ENCODE measurements at regions of chr2 and their contacts with region 1.

Region 1: GRCh38 chr2:34549710-34550345 is 950.7 kb upstream of the FAM98A start:
- DNase-seq: no peak
- H3K4me3 ChIP-seq: no peak overlapping the region
- H3K27ac ChIP-seq: no peak overlapping the region
- H3K4me1 ChIP-seq: no peaks in the 10 kb centered on the region
- H3K27me3 ChIP-seq: no peaks in the 10 kb centered on the region
- CTCF ChIP-seq: no peak
- POLR2A ChIP-seq: no peak

Region 2: DNA sequence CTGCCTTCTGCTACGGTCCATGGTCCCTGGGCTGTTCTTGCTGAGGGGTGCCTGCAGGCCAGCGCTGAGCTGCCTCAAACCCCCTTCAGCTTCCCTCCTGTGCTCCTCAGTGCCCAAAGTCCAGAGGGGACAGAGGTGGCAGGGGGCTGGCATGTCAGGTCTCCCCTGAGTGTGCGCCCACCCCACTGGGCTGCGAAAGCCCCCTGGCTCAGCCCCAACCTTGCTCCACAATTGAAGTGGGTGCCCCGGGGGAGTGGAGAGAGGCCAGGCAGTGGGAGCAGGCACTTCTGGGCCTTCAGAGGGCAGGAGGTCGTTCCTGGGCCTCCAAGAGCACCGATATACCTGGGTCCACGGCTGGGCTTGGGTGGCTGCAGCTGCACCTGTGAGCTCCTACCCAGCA is 402.0 kb before region 1 on chr2:
- intact Hi-C with region 1: no loop called
- DNase-seq: no peak
- H3K4me3 ChIP-seq: no peak overlapping the region
- H3K27ac ChIP-seq: no peak overlapping the region
- H3K4me1 ChIP-seq: no peaks in the 10 kb centered on the region
- H3K27me3 ChIP-seq: no peaks in the 10 kb centered on the region
- CTCF ChIP-seq: no peak
- POLR2A ChIP-seq: no peak

Region 3: GRCh38 chr2:34534761-34535160 is 15.1 kb before region 1 on chr2:
- intact Hi-C with region 1: no loop called
- DNase-seq: no peak
- H3K4me3 ChIP-seq: no peak overlapping the region
- H3K27ac ChIP-seq: no peak overlapping the region
- H3K4me1 ChIP-seq: no peaks in the 10 kb centered on the region
- H3K27me3 ChIP-seq: no peaks in the 10 kb centered on the region
- CTCF ChIP-seq: no peak
- POLR2A ChIP-seq: no peak

Region 4: DNA sequence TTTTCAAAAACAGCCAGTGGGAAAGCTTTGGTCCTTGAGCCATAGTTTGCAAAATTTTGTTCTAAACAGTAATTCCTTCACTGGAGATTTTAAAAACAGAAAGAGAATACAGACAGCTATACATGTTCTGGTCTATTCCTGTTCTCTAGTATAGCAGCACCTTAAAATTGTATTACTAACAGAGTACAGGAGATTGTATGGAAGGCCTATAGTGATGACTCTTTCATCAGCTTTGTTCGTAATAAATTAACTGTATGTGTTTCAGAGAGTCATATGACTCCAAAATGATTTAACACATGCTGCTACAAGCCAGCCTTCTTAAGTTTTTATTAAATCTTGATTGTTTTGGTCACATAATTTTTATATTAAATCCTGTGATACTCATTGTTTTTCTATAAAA is 173.9 kb after region 1 on chr2:
- intact Hi-C with region 1: loop called (anchors 5 kb)
- DNase-seq: no peak
- H3K4me3 ChIP-seq: no peak overlapping the region
- H3K27ac ChIP-seq: no peak overlapping the region
- H3K4me1 ChIP-seq: no peaks in the 10 kb centered on the region
- H3K27me3 ChIP-seq: no peaks in the 10 kb centered on the region
- CTCF ChIP-seq: no peak
- POLR2A ChIP-seq: no peak